Activated naive CD4-positive, alpha-beta T cell treated with anti-CD3 and anti-CD28 coated beads, Interleukin-2, amount 10 ng/mL, durations not matched to agents 7 days and 5 days (primary cell): ENCODE measurements at regions of chr17 and their contacts with region 1.

Region 1: DNA sequence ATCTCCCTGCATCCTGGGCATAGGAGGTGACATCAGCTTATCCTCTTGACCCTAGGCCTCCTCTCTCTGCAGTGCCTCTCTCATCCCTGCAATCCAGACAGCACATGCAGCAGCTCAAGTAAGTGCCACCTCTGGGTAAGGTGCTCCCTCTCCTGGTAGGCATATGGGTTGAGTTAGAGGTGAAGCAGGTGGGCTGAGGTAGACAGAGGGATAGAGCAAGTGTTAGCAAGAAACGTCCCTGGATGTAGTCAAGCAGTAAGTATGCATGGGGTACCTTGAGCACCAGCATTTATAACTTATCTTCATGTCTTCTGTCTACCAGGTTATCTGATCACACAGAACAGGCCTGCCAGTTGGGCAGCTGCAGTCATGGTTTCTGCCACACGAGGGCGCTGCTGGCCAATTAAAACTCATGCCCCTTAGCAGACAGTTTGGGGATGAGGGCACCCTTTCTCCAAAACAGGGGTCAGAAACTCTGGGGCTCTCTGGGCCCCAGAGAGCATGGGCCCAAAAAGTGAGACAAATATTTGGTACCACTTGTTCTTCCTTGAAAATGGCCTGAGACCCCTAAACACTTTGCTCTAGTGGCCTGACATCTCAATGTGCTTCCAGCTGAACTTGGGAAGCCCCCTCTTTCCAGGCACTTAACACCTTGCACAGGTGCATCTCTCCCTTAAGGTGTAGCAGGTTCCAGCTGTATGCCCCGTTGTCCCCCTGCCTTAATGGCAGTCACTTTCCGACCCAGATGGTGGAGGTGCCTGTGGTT is 59.8 kb downstream of the NEUROD2 start:
- DNase-seq: peak; percentile 85
- H3K4me3 Mint-ChIP-seq: no peak overlapping the region
- H3K27ac Mint-ChIP-seq: peak overlapping the region; percentile 59
- H3K4me1 Mint-ChIP-seq: no peaks in the 10 kb centered on the region
- H3K27me3 Mint-ChIP-seq: no peaks in the 10 kb centered on the region

Region 2: GRCh38 chr17:38853292-38854219 is 694.3 kb before region 1 on chr17 and contains the start of gene RPL23:
- CTCF ChIA-PET with region 1: no interaction called
- DNase-seq: peak; percentile 95
- H3K4me3 Mint-ChIP-seq: peak within 1 kb of the TSS; percentile 91
- H3K27ac Mint-ChIP-seq: peak within 1 kb of the TSS; percentile 98
- H3K4me1 Mint-ChIP-seq: peaks cover 46% of the 10 kb centered on the region
- H3K27me3 Mint-ChIP-seq: no peaks in the 10 kb centered on the region

Region 3: GRCh38 chr17:39473310-39473709 is 74.6 kb before region 1 on chr17:
- CTCF ChIA-PET with region 1: no interaction called
- DNase-seq: no peak
- H3K4me3 Mint-ChIP-seq: no peak overlapping the region
- H3K27ac Mint-ChIP-seq: no peak overlapping the region
- H3K4me1 Mint-ChIP-seq: peaks cover 3% of the 10 kb centered on the region
- H3K27me3 Mint-ChIP-seq: no peaks in the 10 kb centered on the region

Region 4: DNA sequence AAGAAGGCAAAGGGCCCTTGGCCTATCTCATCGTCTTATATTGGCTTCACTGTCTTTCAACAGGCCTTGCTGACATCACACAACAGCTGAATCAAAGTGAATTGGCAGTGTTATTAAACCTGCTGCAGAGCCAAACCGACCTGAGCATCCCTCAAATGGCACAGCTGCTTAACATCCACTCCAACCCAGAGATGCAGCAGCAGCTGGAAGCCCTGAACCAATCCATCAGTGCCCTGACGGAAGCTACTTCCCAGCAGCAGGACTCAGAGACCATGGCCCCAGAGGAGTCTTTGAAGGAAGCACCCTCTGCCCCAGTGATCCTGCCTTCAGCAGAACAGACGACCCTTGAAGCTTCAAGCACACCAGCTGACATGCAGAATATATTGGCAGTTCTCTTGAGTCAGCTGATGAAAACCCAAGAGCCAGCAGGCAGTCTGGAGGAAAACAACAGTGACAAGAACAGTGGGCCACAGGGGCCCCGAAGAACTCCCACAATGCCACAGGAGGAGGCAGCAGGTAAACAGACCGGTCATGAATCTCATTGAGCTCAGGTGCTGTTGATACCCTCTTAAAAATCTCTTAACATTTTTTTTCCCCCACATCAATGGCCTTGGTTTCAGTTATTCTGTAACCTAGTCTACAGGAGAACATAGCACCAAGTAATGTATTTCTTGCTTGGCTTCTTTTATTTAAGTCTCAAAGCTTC is 21.9 kb before region 1 on chr17:
- CTCF ChIA-PET with region 1: interaction called, 10 read pairs
- DNase-seq: no peak
- H3K4me3 Mint-ChIP-seq: no peak overlapping the region
- H3K27ac Mint-ChIP-seq: no peak overlapping the region
- H3K4me1 Mint-ChIP-seq: no peaks in the 10 kb centered on the region
- H3K27me3 Mint-ChIP-seq: no peaks in the 10 kb centered on the region